ENCODE measurements at regions of chr1 and their contacts with region 1.

Region 1: DNA sequence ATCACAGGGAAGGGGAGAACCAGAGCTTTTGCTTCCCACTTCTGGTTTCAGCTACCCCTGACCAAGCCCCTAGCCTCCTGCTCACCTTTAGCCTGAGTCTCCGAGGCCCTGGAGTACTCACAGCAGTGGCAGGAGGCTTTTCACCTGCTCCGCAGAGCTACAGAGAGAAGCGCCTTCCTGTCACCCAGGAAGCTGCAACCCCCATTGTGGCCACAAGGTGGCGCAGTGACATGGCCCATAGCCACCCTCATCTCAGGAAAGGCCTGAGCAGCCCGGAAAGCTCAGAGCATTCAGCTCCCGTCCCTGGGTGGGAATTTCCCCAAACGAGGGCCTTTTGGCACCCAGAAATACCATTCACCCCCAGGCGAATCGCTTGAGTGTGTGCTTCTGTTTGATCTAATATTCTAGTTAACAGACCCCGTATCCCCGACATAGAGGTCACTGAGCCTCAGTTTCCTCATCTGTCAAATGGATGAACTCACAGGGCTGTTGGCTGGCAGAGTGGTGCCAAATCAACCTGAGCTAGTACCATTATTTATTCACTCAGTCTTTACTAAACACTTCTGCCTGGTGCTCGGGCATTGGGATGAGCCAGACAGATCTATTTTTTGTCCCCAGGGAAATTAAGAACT is 25.3 kb downstream of the A3GALT2 start:
- DNase-seq: peak; percentile 72 to 96 (median 86)
- ATAC-seq: peak; percentile 96
- H3K4me3 ChIP-seq: no peak overlapping the region
- H3K4me3 Mint-ChIP-seq: no peak overlapping the region
- H3K27ac ChIP-seq: no peak overlapping the region
- H3K27ac Mint-ChIP-seq: no peak overlapping the region
- H3K4me1 ChIP-seq: no peaks in the 10 kb centered on the region
- H3K4me1 Mint-ChIP-seq: peaks cover 9% of the 10 kb centered on the region
- H3K27me3 ChIP-seq: no peaks in the 10 kb centered on the region
- H3K27me3 Mint-ChIP-seq: no peaks in the 10 kb centered on the region
- CTCF ChIP-seq: peak; percentile 93

Region 2: DNA sequence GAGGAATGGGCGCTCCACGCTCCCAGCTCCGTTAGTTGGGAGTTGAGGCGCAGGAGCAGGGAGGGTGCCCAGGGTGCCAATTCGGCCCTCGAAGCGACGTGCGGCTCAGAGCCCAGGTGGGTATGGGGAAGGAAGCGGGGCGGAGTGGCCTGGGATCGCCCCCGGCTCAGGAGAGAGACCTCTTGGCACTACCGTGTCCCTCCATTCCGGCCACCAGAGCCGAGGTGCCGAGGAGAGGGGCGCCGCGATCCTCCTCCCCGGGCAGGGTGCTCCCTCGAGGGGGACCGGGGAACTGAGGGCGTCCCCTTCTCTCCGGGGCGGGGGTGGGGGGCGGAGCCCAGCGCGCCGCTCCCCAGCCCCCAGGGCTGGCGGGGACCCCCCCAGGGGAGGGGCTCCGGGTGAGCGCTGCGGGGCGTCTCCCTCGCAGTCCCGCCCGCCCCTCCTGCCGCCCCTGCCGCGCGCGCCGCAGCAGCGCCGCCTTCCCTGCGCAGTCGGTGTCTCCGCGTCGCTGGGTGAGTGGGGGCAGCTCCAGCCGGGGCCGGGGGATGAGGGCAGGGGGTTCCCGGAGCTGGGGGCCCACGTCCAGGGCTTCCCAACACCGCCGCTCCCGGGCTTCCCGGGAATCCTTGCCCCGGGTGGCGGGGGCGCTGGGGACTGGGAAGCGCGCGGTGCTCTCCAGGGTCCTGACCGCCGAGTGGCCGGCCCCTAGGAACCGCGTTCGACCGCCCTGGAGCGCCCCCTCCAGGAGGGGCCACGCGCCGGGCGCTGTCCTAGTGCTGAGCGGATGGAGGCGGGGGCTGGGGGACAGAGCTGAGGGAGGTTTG is 409.4 kb before region 1 on chr1 and contains the start of gene HPCA:
- CTCF ChIA-PET with region 1: no interaction called
- POLR2A ChIA-PET with region 1: no interaction called
- intact Hi-C with region 1: no loop called
- DNase-seq: peak in 5 of 9 experiments; percentile 18 to 58 (median 53)
- ATAC-seq: peak; percentile 88
- H3K4me3 ChIP-seq: no peak within 1 kb of the TSS
- H3K4me3 Mint-ChIP-seq: no peak within 1 kb of the TSS
- H3K27ac ChIP-seq: no peak within 1 kb of the TSS
- H3K27ac Mint-ChIP-seq: no peak within 1 kb of the TSS
- H3K4me1 ChIP-seq: no peaks in the 10 kb centered on the region
- H3K4me1 Mint-ChIP-seq: peaks cover 8% of the 10 kb centered on the region
- H3K27me3 ChIP-seq: peaks cover 10 to 12% of the 10 kb centered on the region in 2 experiments
- H3K27me3 Mint-ChIP-seq: peaks cover 57% of the 10 kb centered on the region
- CTCF ChIP-seq: peak; percentile 18
- total RNA-seq, gene HPCA: not detected

Region 3: DNA sequence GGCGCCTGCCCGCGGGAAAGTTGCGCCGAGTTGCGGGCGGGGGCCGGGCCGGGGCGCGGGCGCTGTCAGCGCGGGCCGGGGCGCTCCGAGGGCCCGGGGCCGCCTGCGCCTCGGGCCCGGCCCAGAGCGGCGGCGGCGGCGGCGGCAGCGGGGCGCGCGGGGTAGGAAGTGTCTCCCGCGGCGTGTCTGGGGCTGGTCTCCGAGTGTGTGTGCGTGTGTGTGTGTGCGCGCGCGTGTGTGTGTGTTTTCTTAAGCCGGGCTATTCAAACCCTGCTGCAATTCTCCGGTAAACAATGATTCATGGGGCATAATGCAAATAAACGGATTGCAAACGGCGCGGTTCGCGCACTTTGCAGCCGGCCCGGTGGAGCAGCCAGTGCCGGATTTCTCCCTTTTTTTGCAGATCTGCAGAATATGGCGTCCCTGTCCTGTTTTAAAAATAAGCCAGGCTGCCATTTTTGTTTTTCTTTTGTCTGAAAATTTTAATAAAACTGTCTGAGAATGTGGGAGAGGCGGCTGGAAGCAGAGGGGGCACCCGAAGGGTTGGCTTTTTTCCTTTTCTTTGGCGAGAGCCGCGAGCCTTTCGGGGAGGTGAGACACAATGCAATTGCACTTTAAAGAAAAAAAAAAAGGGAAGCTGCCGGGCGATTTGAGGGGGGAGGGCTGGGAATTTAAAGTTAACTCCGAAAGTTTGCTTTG is 38.7 kb before region 1 on chr1:
- CTCF ChIA-PET with region 1: interaction called, 6 read pairs
- POLR2A ChIA-PET with region 1: no interaction called
- intact Hi-C with region 1: loop called in 1 of 2 experiments (anchors 5 kb)
- DNase-seq: peak; percentile 13 to 73 (median 55)
- ATAC-seq: peak; percentile 65
- H3K4me3 ChIP-seq: peak overlapping the region; percentile 62 to 75
- H3K4me3 Mint-ChIP-seq: peak overlapping the region; percentile 99
- H3K27ac ChIP-seq: peak overlapping the region; percentile 48 to 51
- H3K27ac Mint-ChIP-seq: peak overlapping the region; percentile 97
- H3K4me1 ChIP-seq: peaks cover 42% of the 10 kb centered on the region
- H3K4me1 Mint-ChIP-seq: peaks cover 47% of the 10 kb centered on the region
- H3K27me3 ChIP-seq: no peaks in the 10 kb centered on the region
- H3K27me3 Mint-ChIP-seq: no peaks in the 10 kb centered on the region
- CTCF ChIP-seq: no peak

Region 4: GRCh38 chr1:33284049-33284448 is 11.5 kb before region 1 on chr1:
- CTCF ChIA-PET with region 1: interaction called, 10 read pairs
- POLR2A ChIA-PET with region 1: no interaction called
- intact Hi-C with region 1: no loop called
- DNase-seq: no peak
- ATAC-seq: no peak
- H3K4me3 ChIP-seq: no peak overlapping the region
- H3K4me3 Mint-ChIP-seq: no peak overlapping the region
- H3K27ac ChIP-seq: no peak overlapping the region
- H3K27ac Mint-ChIP-seq: no peak overlapping the region
- H3K4me1 ChIP-seq: no peaks in the 10 kb centered on the region
- H3K4me1 Mint-ChIP-seq: no peaks in the 10 kb centered on the region
- H3K27me3 ChIP-seq: no peaks in the 10 kb centered on the region
- H3K27me3 Mint-ChIP-seq: no peaks in the 10 kb centered on the region
- CTCF ChIP-seq: no peak

Region 5: DNA sequence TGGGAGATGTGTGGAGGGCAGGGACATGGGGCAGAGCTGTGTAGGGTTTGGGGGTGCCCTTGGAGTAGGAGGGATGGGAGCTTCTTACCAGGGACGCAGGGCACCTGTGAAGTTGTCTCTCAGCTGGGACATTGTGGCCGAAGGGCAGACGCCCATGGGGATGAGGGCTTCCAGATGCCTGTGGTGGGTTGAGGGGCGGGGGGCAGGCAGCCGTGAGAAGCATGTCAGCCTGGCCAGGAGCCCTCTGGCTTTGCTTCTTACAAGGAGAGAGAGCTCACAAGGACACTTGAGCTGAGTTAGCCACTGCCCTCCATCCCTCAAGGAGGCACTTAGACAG is 16.8 kb after region 1 on chr1:
- CTCF ChIA-PET with region 1: interaction called, 10 read pairs
- POLR2A ChIA-PET with region 1: no interaction called
- intact Hi-C with region 1: no loop called
- DNase-seq: no peak
- ATAC-seq: no peak
- H3K4me3 ChIP-seq: no peak overlapping the region
- H3K4me3 Mint-ChIP-seq: no peak overlapping the region
- H3K27ac ChIP-seq: no peak overlapping the region
- H3K27ac Mint-ChIP-seq: no peak overlapping the region
- H3K4me1 ChIP-seq: no peaks in the 10 kb centered on the region
- H3K4me1 Mint-ChIP-seq: peaks cover 5% of the 10 kb centered on the region
- H3K27me3 ChIP-seq: no peaks in the 10 kb centered on the region
- H3K27me3 Mint-ChIP-seq: peaks cover 16% of the 10 kb centered on the region
- CTCF ChIP-seq: no peak

Region 6: GRCh38 chr1:33349778-33350610 is 54.4 kb after region 1 on chr1:
- CTCF ChIA-PET with region 1: interaction called, 6 read pairs
- POLR2A ChIA-PET with region 1: no interaction called
- intact Hi-C with region 1: loop called (anchors 1 to 5 kb)
- DNase-seq: peak; percentile 64 to 92 (median 75)
- ATAC-seq: peak; percentile 86
- H3K4me3 ChIP-seq: peak overlapping the region; percentile 82 to 93
- H3K4me3 Mint-ChIP-seq: peak overlapping the region; percentile 91
- H3K27ac ChIP-seq: peak overlapping the region; percentile 63 to 75
- H3K27ac Mint-ChIP-seq: peak overlapping the region; percentile 76
- H3K4me1 ChIP-seq: peaks cover 32% of the 10 kb centered on the region
- H3K4me1 Mint-ChIP-seq: peaks cover 48% of the 10 kb centered on the region
- H3K27me3 ChIP-seq: no peaks in the 10 kb centered on the region
- H3K27me3 Mint-ChIP-seq: no peaks in the 10 kb centered on the region
- CTCF ChIP-seq: no peak

Region 7: DNA sequence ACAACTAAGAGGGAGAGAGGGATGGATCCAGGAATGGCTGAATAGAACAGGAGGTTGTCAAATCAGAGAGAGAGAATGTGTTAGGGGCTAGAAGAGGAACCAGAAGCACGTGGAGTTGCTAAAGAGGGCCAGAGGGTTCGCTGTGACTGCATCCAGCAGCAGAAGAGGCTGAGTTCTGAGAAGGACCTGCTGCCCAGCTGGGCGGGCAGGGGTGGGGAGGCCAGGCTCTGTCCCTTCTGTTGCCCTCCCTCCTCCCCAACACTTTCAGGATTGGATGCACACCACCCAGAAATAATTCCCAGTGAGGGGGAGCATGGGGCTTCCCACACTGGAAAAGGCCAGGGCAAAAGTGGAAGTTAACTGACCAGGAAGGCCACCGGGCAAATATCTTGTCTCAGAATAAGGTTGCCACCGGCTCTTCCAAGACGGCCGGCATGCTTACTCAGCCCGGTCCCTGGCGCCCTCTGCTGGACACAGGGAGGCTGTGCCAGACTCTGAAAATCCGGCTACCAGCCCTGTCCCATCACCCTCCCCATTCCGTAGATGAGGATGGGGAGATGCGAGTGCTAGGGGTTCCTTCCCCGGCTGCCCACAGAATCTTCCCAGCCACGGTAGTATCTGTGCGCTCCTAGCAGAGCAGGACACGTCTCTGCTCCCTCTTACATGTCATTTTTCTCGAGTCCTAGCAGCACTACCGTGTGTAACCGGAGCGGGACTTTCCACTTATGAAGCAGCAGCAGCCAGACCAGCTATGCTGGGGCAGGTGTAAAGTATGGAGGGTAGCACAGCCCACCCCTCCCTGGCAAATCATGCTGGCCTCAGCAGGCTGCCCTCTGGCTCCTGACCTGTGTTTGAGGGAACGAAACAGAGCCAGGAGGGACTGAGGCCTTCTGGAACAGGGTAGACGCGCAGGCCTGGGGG is 72.2 kb after region 1 on chr1:
- CTCF ChIA-PET with region 1: interaction called, 127 read pairs
- POLR2A ChIA-PET with region 1: no interaction called
- intact Hi-C with region 1: loop called (anchors 1 kb)
- DNase-seq: peak; percentile 72 to 92 (median 86)
- ATAC-seq: peak; percentile 99
- H3K4me3 ChIP-seq: no peak overlapping the region
- H3K4me3 Mint-ChIP-seq: no peak overlapping the region
- H3K27ac ChIP-seq: no peak overlapping the region
- H3K27ac Mint-ChIP-seq: no peak overlapping the region
- H3K4me1 ChIP-seq: no peaks in the 10 kb centered on the region
- H3K4me1 Mint-ChIP-seq: peaks cover 1% of the 10 kb centered on the region
- H3K27me3 ChIP-seq: no peaks in the 10 kb centered on the region
- H3K27me3 Mint-ChIP-seq: no peaks in the 10 kb centered on the region
- CTCF ChIP-seq: peak; percentile 86

Measured in CD8-positive, alpha-beta T cell (primary cell).